ENCODE measurements at regions of chr4 and their contacts with region 1.

Region 1: DNA sequence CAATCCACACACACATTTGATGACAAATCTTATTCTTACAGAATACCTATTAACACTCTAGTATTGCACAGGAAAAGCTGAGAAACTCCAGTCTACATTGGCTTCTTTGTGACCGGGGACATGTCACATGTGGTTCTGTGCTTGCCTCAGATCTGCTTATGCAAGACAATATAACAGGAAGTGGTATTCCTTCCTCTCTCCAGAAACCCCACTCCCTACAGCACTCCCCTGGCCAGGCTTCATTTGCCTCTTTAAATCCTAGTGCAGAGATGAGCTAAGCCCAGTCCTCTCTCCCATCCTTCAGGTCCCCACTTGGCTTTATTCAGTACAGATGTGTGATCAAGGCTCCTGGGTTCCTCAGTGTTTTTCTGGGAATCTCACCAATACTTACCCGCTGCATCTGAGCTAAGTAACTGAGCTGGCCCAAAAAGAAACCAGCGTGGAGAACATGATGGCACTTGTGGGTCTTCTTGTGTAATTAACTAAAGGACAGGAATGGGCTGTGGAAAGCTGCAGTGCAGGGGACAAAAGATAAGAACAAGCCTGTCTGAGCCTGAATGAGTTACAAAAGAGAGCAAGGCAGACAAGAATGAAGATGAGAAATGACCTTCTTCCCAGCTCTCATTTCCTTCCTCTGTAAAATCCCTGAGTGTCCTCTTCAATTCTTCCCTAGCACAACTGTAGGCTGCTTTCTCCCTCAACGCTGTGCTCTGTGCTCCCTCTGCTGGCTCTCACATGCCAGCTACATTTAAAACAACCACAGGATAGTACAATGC is 105.6 kb downstream of the HNRNPD start:
- DNase-seq: peak; percentile 44
- H3K4me3 Mint-ChIP-seq: no peak overlapping the region
- H3K27ac Mint-ChIP-seq: no peak overlapping the region
- H3K4me1 Mint-ChIP-seq: peaks cover 10% of the 10 kb centered on the region
- H3K27me3 Mint-ChIP-seq: no peaks in the 10 kb centered on the region
- CTCF ChIP-seq: peak; percentile 46

Region 2: GRCh38 chr4:81913427-81913879 is 354.8 kb before region 1 on chr4:
- CTCF ChIA-PET with region 1: no interaction called
- intact Hi-C with region 1: loop called (anchors 10 kb)
- DNase-seq: peak; percentile 45
- H3K4me3 Mint-ChIP-seq: no peak overlapping the region
- H3K27ac Mint-ChIP-seq: no peak overlapping the region
- H3K4me1 Mint-ChIP-seq: peaks cover 20% of the 10 kb centered on the region
- H3K27me3 Mint-ChIP-seq: no peaks in the 10 kb centered on the region
- CTCF ChIP-seq: peak; percentile 43

Region 3: GRCh38 chr4:82201805-82202641 is 66.2 kb before region 1 on chr4:
- CTCF ChIA-PET with region 1: no interaction called
- intact Hi-C with region 1: loop called (anchors 5 kb)
- DNase-seq: peak; percentile 62
- H3K4me3 Mint-ChIP-seq: no peak overlapping the region
- H3K27ac Mint-ChIP-seq: no peak overlapping the region
- H3K4me1 Mint-ChIP-seq: peaks cover 42% of the 10 kb centered on the region
- H3K27me3 Mint-ChIP-seq: no peaks in the 10 kb centered on the region
- CTCF ChIP-seq: peak; percentile 65

Region 4: GRCh38 chr4:82217986-82218715 is 50.1 kb before region 1 on chr4:
- CTCF ChIA-PET with region 1: interaction called, 3 read pairs
- intact Hi-C with region 1: loop called (anchors 5 kb)
- DNase-seq: peak; percentile 37
- H3K4me3 Mint-ChIP-seq: no peak overlapping the region
- H3K27ac Mint-ChIP-seq: peak overlapping the region; percentile 62
- H3K4me1 Mint-ChIP-seq: peaks cover 46% of the 10 kb centered on the region
- H3K27me3 Mint-ChIP-seq: no peaks in the 10 kb centered on the region
- CTCF ChIP-seq: peak; percentile 36

Measured in Calu3 (cell line).